ENCODE measurements at regions of chr1 and their contacts with region 1.

Region 1: DNA sequence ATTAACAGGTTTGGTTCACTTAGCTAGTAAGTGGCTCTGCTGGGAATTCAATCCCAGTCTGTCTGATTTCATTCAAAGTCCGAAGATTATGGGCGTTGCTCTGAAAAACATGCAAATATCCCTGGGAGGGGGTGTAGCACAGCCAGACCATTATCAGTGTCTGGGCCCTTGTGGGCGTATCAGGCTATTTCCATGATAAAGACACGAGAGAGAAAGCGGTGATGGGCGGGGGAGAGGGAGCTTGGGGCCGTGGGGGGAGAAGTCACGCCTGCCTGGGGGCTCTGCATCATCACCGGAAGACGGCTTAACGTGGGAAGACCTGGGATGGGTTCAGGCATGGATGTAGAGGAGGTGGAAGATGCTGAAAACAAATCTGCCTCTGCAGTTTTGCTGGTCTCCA is 25.8 kb downstream of the IL6R start:
- DNase-seq: no peak
- ATAC-seq: no peak
- H3K4me3 ChIP-seq: no peak overlapping the region
- H3K27ac ChIP-seq: no peak overlapping the region
- H3K4me1 ChIP-seq: peaks cover 33% of the 10 kb centered on the region
- CTCF ChIP-seq: no peak
- EP300 ChIP-seq: no peak
- POLR2A ChIP-seq: no peak
- RAD21 ChIP-seq: no peak

Region 2: DNA sequence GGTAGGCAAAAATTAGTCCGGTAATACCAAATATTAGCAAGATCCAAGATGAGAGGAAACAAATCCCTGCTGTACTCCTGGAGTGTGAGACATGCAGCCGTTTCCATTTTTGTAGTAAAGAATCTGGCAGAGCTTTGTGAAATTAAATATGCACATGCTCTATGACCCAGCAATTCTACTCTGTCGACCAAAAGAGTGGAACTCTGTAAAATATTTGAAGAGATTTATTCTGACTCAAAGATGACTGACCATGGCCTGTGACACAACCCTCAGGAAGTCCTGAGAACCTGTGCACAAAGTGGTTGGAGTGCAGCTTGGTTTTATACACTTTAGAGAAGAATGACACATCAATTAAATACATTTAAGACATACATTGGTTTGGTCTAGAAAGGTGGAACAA is 142.2 kb before region 1 on chr1:
- CTCF ChIA-PET with region 1: no interaction called
- POLR2A ChIA-PET with region 1: no interaction called
- DNase-seq: no peak
- ATAC-seq: no peak; a peak in 1 of 6 replicates
- H3K4me3 ChIP-seq: no peak overlapping the region
- H3K27ac ChIP-seq: no peak overlapping the region
- H3K4me1 ChIP-seq: no peaks in the 10 kb centered on the region
- CTCF ChIP-seq: no peak
- EP300 ChIP-seq: no peak
- POLR2A ChIP-seq: no peak
- RAD21 ChIP-seq: no peak

Region 3: GRCh38 chr1:154419620-154420571 is 11.0 kb before region 1 on chr1:
- CTCF ChIA-PET with region 1: interaction called, 11 read pairs
- POLR2A ChIA-PET with region 1: interaction called, 4 read pairs
- DNase-seq: peak; percentile 80 to 86
- ATAC-seq: peak; percentile 55 to 64
- H3K4me3 ChIP-seq: peak overlapping the region; percentile 27; the same call in 2 of the 3 replicates
- H3K27ac ChIP-seq: peak overlapping the region; percentile 94 to 96
- H3K4me1 ChIP-seq: peaks cover 75% of the 10 kb centered on the region
- CTCF ChIP-seq: no peak
- EP300 ChIP-seq: peak; percentile 25 to 44; a peak in 2 of 5 replicates
- POLR2A ChIP-seq: no peak
- RAD21 ChIP-seq: no peak

Region 4: GRCh38 chr1:154463512-154463990 is 32.6 kb after region 1 on chr1:
- CTCF ChIA-PET with region 1: no interaction called
- POLR2A ChIA-PET with region 1: no interaction called
- DNase-seq: no peak
- ATAC-seq: no peak; a peak in 1 of 6 replicates
- H3K4me3 ChIP-seq: no peak overlapping the region
- H3K27ac ChIP-seq: peak overlapping the region; percentile 53 to 83
- H3K4me1 ChIP-seq: peaks cover 13% of the 10 kb centered on the region
- CTCF ChIP-seq: no peak
- EP300 ChIP-seq: no peak
- POLR2A ChIP-seq: no peak
- RAD21 ChIP-seq: no peak

Region 5: GRCh38 chr1:154802982-154803920 is 372.3 kb after region 1 on chr1:
- CTCF ChIA-PET with region 1: no interaction called
- POLR2A ChIA-PET with region 1: no interaction called
- DNase-seq: no peak
- ATAC-seq: no peak; a peak in 1 of 6 replicates
- H3K4me3 ChIP-seq: no peak overlapping the region
- H3K27ac ChIP-seq: no peak overlapping the region
- H3K4me1 ChIP-seq: no peaks in the 10 kb centered on the region
- CTCF ChIP-seq: no peak
- EP300 ChIP-seq: no peak
- POLR2A ChIP-seq: no peak
- RAD21 ChIP-seq: no peak

Measured in A549 (cell line).